Dorsolateral prefrontal cortex (tissue), 120 donors: ENCODE measurements at regions of chr18 and their contacts with region 1.

Region 1: DNA sequence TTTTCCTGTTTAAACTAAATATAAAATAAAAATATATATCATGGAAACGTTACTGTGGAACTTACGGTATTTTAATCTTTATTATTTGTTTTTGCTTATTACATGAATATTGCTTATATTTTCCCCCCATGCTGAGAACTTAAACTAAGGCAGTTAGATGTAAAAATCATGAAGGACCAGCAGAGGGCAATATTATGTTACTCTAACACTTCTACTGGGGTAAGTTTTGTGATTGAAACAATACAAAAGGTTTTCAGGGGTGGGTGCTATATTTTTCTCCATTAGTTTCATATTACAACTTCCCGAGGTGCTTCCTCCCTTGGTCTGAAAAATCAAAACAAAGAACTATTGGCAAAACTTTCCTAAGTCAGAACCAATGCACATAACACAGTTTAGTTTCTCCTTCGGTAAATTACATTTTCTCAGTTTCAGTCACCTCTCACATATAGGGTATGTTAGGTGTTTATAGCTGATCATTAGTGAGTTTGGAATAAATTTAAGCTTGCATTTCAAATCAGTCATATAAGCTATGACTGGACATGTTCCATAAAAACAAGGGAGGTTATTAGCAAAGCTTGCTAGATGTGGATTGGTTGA is 54.8 kb downstream of the ZNF407 start:
- DNase-seq: no peak
- H3K4me3 ChIP-seq: no peak overlapping the region
- H3K27ac ChIP-seq: no peak overlapping the region
- H3K27me3 ChIP-seq: no peaks in the 10 kb centered on the region
- CTCF ChIP-seq: peak; percentile 40 to 87 (median 71)

Region 2: GRCh38 chr18:74546751-74547550 is 105.5 kb before region 1 on chr18:
- intact Hi-C with region 1: no loop called
- DNase-seq: no peak
- H3K4me3 ChIP-seq: no peak overlapping the region
- H3K27ac ChIP-seq: peak overlapping the region in 54 of 59 donors; percentile 26 to 96 (median 73)
- H3K27me3 ChIP-seq: no peaks in the 10 kb centered on the region
- CTCF ChIP-seq: no peak

Region 3: GRCh38 chr18:74963820-74964446 is 311.4 kb after region 1 on chr18:
- intact Hi-C with region 1: loop called (anchors 5 to 10 kb)
- DNase-seq: peak in 2 of 10 donors; percentile 39
- H3K4me3 ChIP-seq: no peak overlapping the region
- H3K27ac ChIP-seq: no peak overlapping the region
- H3K27me3 ChIP-seq: no peaks in the 10 kb centered on the region
- CTCF ChIP-seq: peak in 54 of 56 donors; percentile 21 to 76 (median 53)

Region 4: DNA sequence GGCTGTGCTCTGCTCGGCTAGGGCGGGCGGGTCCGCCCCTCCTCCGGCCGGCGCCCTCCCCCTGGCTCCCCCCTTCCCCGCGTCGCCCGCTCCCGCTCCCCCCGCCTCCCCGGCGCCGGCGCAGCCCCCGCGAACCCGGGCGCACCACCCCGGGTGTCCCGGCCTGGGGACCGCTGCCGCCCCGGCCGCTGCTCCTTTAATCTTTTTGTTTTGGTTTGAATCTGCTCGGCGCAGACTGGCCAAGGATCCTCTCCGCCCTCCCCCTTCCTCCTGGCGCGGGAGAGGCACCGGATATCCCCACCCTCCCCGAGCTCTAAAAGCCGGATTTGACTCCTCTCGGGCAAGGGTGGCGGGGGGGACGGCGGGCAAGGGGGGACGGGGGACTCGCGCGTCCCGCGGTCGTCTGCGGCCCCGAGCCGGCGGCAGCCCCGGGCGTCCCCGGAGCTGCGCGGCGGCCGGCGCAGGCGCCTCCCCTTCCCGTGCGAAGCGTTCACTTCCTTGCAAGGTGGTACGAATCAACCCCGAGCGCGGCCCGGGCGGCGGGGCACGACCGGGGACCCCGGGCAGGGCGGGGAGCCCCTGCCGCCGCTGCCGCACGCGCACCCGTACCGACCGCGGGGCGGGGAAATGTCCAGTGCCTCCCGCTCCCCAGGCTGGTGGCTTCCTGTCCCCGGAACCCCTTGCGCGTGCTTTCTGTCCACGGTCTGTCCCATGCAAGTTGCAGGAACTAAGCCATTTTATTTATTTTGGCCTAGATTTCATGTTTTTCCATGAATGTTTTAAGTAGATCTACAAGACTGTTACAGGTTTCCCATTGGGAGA is 556.9 kb after region 1 on chr18 and contains the start of gene PTGR3:
- intact Hi-C with region 1: loop called in 1 of 2 experiments (anchors 10 kb)
- DNase-seq: peak in 9 of 10 donors; percentile 49 to 84 (median 74)
- H3K4me3 ChIP-seq: peak within 1 kb of the TSS; percentile 58 to 97 (median 89)
- H3K27ac ChIP-seq: peak within 1 kb of the TSS; percentile 74 to 99 (median 96)
- H3K27me3 ChIP-seq: no peaks in the 10 kb centered on the region
- CTCF ChIP-seq: peak in 1 of 56 donors; percentile 5
- total RNA-seq, gene PTGR3: 32.1 to 76.5 (median 56.0) TPM

Region 5: GRCh38 chr18:75462178-75462832 is 809.8 kb after region 1 on chr18:
- intact Hi-C with region 1: loop called in 1 of 2 experiments (anchors 10 kb)
- DNase-seq: no peak
- H3K4me3 ChIP-seq: no peak overlapping the region
- H3K27ac ChIP-seq: no peak overlapping the region
- H3K27me3 ChIP-seq: no peaks in the 10 kb centered on the region
- CTCF ChIP-seq: no peak

Region 6: DNA sequence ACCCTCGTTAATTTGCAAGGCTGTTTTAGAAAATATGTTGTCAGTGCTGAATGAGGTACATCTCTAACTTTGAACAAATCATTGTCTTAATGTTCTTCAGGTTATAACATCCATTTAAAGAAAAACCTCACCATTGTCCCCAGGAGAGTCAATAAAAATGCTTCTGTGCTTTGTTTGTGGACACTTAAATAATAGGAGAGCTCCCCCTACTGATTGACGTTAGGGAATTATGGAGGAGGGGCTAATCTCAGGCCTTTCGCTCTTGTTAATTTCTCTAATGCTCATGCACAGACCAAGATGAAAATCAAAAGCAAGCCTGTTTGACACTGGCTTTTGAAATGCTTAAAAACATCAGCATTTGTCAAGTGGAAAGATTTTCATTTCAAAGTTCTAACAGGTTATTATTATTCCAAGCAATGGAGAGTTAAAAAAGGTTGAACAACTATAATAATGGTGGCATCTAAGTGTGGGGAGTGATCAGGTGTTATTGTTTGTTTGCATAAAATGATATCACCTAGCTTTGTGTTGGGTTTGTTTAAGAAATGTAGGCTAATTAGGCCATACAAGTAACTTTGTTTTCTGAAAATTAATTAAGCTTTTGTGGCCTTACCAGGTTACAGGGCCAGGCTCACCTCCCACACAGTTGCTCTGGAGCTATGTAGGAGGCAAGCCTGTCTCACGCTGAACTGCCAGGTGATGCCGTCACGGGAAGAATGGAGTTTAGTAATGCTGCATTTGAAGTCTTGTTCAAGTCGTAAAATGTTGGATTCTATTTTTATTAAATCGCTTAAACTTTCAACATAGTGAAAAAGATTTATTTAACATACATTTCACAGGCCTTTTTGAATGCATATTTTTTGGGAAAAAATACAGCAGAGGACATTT is 826.7 kb after region 1 on chr18:
- intact Hi-C with region 1: loop called in 1 of 2 experiments (anchors 5 kb)
- DNase-seq: no peak
- H3K4me3 ChIP-seq: no peak overlapping the region
- H3K27ac ChIP-seq: peak overlapping the region in 21 of 59 donors; percentile 0 to 66 (median 23)
- H3K27me3 ChIP-seq: no peaks in the 10 kb centered on the region
- CTCF ChIP-seq: peak; percentile 21 to 85 (median 65)

Region 7: DNA sequence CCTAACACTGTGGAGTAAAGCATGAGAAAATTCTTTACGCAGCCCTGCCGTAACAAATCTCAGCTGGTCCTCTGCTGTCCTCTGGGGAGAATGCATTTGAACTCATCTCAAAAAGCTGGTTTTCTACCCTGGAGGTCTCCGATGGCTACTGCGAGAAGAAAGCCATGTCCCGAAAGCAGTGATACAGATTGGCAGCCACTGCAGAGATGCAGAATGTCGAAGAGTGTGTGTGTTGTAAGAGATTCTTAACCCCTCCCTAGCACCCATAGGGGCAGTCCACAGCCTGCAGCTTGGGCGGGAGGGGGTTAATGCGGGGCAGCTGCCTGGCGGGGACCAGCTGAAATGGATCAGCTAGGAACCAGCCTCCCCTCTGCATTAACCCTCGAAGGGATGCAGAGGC is 1606.6 kb after region 1 on chr18:
- intact Hi-C with region 1: loop called in 1 of 2 experiments (anchors 5 kb)
- DNase-seq: no peak
- H3K4me3 ChIP-seq: peak overlapping the region in 3 of 59 donors; percentile 1 to 22 (median 18)
- H3K27ac ChIP-seq: peak overlapping the region in 10 of 59 donors; percentile 2 to 35 (median 18)
- H3K27me3 ChIP-seq: peaks cover 0 to 14% (median 0%) of the 10 kb centered on the region in 45 donors
- CTCF ChIP-seq: no peak

Region 8: DNA sequence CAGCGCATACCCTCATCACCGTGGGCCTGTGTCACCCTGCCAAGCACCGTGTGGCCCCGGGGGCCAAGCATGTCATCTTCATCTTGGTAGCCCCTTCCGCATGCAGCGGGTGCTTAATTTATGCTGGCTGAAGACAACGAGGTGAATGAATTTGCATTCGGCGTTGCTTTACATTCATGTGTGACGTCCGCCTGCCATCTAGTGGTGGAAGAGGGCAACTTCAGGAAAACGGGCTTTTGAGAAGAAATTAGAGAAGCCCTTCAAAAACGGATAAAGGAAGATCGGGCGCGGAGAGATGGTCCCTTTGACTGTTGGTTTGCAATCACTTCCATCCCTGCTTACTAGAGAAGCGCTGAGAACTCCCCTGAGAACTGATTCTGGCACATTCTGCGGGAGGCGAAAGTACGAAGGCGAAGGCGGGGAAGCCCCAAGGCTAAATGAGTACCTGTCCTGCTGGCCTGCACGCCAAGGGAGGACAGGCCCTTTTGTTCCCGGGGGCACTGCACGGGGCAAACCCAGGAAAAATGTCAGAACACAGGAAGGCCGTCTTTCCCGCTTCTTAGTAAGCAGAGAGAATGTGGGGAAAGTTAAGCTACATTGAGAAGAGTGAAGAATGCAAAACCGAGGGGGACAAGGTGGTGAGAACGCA is 1696.7 kb after region 1 on chr18:
- intact Hi-C with region 1: loop called in 1 of 2 experiments (anchors 10 kb)
- DNase-seq: peak in 7 of 10 donors; percentile 48 to 87 (median 76)
- H3K4me3 ChIP-seq: peak overlapping the region in 52 of 59 donors; percentile 6 to 64 (median 42)
- H3K27ac ChIP-seq: peak overlapping the region in 1 of 59 donors; percentile 55
- H3K27me3 ChIP-seq: no peaks in the 10 kb centered on the region
- CTCF ChIP-seq: peak; percentile 80 to 98 (median 86)